Natural killer cell (primary cell): ENCODE measurements at regions of chr1 and their contacts with region 1.

Region 1: GRCh38 chr1:235160957-235161684 is at the start of gene RBM34:
- DNase-seq: peak; percentile 90 to 96
- ATAC-seq: peak; percentile 93 to 98 (median 95)
- H3K4me3 ChIP-seq: peak within 1 kb of the TSS; percentile 80
- H3K4me3 Mint-ChIP-seq: peak within 1 kb of the TSS; percentile 92
- H3K27ac ChIP-seq: peak within 1 kb of the TSS; percentile 81
- H3K27ac Mint-ChIP-seq: peak within 1 kb of the TSS; percentile 96 to 97
- H3K4me1 ChIP-seq: peaks cover 22% of the 10 kb centered on the region
- H3K4me1 Mint-ChIP-seq: peaks cover 18 to 20% of the 10 kb centered on the region in 2 donors
- H3K27me3 ChIP-seq: no peaks in the 10 kb centered on the region
- H3K27me3 Mint-ChIP-seq: no peaks in the 10 kb centered on the region
- CTCF ChIP-seq: no peak
- total RNA-seq, gene RBM34: 163 to 187 (median 180) TPM

Region 2: GRCh38 chr1:235105051-235106043 is 55.8 kb before region 1 on chr1:
- intact Hi-C with region 1: loop called (anchors 2 kb)
- DNase-seq: peak in 1 of 2 donors; percentile 63
- ATAC-seq: peak; percentile 43 to 73 (median 68)
- H3K4me3 ChIP-seq: no peak overlapping the region
- H3K4me3 Mint-ChIP-seq: peak overlapping the region; percentile 85
- H3K27ac ChIP-seq: peak overlapping the region; percentile 30
- H3K27ac Mint-ChIP-seq: peak overlapping the region; percentile 66 to 78
- H3K4me1 ChIP-seq: peaks cover 12% of the 10 kb centered on the region
- H3K4me1 Mint-ChIP-seq: peaks cover 20 to 23% of the 10 kb centered on the region in 2 donors
- H3K27me3 ChIP-seq: peaks cover 3% of the 10 kb centered on the region
- H3K27me3 Mint-ChIP-seq: peaks cover 0 to 6% of the 10 kb centered on the region in 2 donors
- CTCF ChIP-seq: no peak

Region 3: GRCh38 chr1:235128456-235129328 is 32.4 kb before region 1 on chr1 and contains the start of gene TOMM20:
- intact Hi-C with region 1: loop called (anchors 1 kb)
- DNase-seq: peak; percentile 90 to 98
- ATAC-seq: peak; percentile 90 to 98 (median 94)
- H3K4me3 ChIP-seq: peak within 1 kb of the TSS; percentile 98
- H3K4me3 Mint-ChIP-seq: peak within 1 kb of the TSS; percentile 98
- H3K27ac ChIP-seq: peak within 1 kb of the TSS; percentile 90
- H3K27ac Mint-ChIP-seq: peak within 1 kb of the TSS; percentile 96
- H3K4me1 ChIP-seq: peaks cover 27% of the 10 kb centered on the region
- H3K4me1 Mint-ChIP-seq: peaks cover 40 to 42% of the 10 kb centered on the region in 2 donors
- H3K27me3 ChIP-seq: no peaks in the 10 kb centered on the region
- H3K27me3 Mint-ChIP-seq: no peaks in the 10 kb centered on the region
- CTCF ChIP-seq: no peak
- total RNA-seq, gene TOMM20: 59.5 to 72.3 (median 60.2) TPM

Region 4: DNA sequence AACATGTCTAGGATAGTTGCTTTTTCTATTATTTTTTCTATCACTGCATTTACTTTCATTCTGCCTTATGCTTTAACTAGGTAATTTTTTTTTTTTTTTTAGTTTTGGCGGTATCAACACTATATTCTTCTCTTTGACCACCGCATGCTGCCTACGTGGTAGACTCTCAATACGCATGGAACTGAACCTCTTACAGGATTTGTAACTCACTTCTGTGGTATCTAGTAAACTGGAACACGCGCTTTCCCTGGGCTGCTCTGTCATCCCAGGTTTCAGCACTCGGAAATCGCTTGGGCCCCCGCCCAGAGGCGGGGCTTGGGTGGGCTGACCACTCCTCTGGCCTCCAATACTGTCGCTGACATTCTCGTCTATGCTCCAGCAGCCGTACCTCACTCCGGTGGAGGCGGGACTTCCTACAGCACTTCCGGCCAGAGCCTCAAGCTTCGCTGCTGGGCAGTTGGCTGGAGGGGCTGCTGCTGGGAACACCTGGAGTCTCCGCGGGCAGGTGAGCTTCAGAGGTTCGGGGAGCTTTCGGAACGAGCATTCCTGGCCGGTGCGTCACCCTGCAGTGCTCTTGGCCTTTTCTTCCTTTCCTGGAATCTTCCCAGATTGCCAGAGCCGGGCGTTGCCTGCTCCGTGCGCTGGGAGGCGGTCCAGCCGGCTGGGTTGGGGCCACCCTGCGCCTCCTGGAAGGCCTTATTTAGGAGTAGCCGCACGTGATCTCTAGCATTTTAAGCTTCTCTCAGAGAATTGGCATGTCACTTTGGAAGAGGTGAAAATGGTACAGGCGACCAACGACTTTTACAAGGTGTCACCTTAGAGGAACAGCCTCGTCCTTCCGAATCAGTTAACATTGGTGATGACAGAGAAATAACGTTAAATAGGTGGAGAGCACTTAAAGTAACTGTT is 206.1 kb after region 1 on chr1 and contains the start of gene TBCE:
- intact Hi-C with region 1: loop called (anchors 5 kb)
- DNase-seq: peak; percentile 85 to 87
- ATAC-seq: peak; percentile 100
- H3K4me3 ChIP-seq: peak within 1 kb of the TSS; percentile 66
- H3K4me3 Mint-ChIP-seq: peak within 1 kb of the TSS; percentile 99
- H3K27ac ChIP-seq: peak within 1 kb of the TSS; percentile 36
- H3K27ac Mint-ChIP-seq: peak within 1 kb of the TSS; percentile 88 to 94
- H3K4me1 ChIP-seq: peaks cover 6% of the 10 kb centered on the region
- H3K4me1 Mint-ChIP-seq: peaks cover 14 to 26% of the 10 kb centered on the region in 2 donors
- H3K27me3 ChIP-seq: no peaks in the 10 kb centered on the region
- H3K27me3 Mint-ChIP-seq: no peaks in the 10 kb centered on the region
- CTCF ChIP-seq: no peak
- total RNA-seq, gene TBCE: 24.1 to 25.2 (median 25.0) TPM

Region 5: DNA sequence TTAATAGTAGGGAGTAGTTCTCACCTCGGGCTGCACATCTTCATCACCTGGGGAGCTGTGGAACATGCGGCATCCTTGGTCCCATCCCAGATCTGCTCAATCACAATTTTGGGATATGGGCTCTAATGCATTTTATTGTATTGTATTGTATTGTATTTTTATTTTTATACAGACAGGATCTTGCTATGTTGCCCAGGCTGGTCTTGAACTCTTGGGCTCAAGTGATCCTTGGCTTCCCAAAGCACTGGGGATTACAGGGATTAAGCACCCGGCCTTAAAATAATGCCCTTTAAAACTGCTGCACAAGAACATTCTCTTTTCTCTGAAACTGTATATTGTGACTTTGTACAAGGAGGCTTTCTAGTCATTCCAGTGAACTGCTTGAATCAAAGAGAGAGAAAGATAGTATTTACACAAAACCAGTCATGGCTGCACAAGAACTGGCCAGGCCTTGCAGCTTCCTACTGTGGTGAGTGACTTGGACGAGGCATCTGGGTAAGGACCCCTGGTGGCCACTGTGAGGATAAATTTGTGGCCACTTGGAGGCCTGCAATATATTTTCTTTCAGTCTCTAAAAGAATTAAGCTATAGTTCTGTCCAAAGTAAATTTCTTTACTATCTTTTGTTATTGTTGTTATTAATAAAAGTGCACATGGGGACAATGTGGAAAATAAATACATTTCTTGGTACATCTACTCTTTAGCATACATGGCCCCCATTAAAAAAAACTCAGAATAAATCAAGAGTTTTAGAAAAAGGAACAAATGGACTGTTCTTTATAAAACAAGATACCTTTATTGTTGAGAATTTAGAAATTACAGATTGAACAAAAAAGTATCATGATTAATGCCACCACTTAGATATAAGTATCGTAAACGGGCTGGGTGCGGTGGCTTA is 254.1 kb after region 1 on chr1:
- intact Hi-C with region 1: loop called (anchors 1 kb)
- DNase-seq: peak; percentile 29 to 79
- ATAC-seq: peak; percentile 75 to 92 (median 83)
- H3K4me3 ChIP-seq: no peak overlapping the region
- H3K4me3 Mint-ChIP-seq: no peak overlapping the region
- H3K27ac ChIP-seq: no peak overlapping the region
- H3K27ac Mint-ChIP-seq: no peak overlapping the region
- H3K4me1 ChIP-seq: no peaks in the 10 kb centered on the region
- H3K4me1 Mint-ChIP-seq: peaks cover 6 to 9% of the 10 kb centered on the region in 2 donors
- H3K27me3 ChIP-seq: no peaks in the 10 kb centered on the region
- H3K27me3 Mint-ChIP-seq: no peaks in the 10 kb centered on the region
- CTCF ChIP-seq: peak; percentile 89